CD4-positive, alpha-beta memory T cell (primary cell): ENCODE measurements at regions of chr1 and their contacts with region 1.

Region 1: GRCh38 chr1:37682334-37682987 is 9.9 kb upstream of the CDCA8 start:
- DNase-seq: peak; percentile 67 to 77 (median 72)
- H3K4me3 ChIP-seq: no peak overlapping the region
- H3K4me3 Mint-ChIP-seq: no peak overlapping the region
- H3K27ac ChIP-seq: no peak overlapping the region
- H3K27ac Mint-ChIP-seq: peak overlapping the region; percentile 9 to 86 (median 77)
- H3K4me1 ChIP-seq: peaks cover 3% of the 10 kb centered on the region
- H3K4me1 Mint-ChIP-seq: peaks cover 3 to 15% (median 5%) of the 10 kb centered on the region in 4 donors
- H3K27me3 ChIP-seq: no peaks in the 10 kb centered on the region
- H3K27me3 Mint-ChIP-seq: no peaks in the 10 kb centered on the region

Region 2: GRCh38 chr1:36576118-36576517 is 1106.3 kb before region 1 on chr1:
- CTCF ChIA-PET with region 1: no interaction called
- POLR2A ChIA-PET with region 1: no interaction called
- intact Hi-C with region 1: loop called (anchors 10 kb)
- DNase-seq: peak; percentile 15 to 41 (median 34)
- H3K4me3 ChIP-seq: no peak overlapping the region
- H3K4me3 Mint-ChIP-seq: no peak overlapping the region
- H3K27ac ChIP-seq: no peak overlapping the region
- H3K27ac Mint-ChIP-seq: no peak overlapping the region
- H3K4me1 ChIP-seq: no peaks in the 10 kb centered on the region
- H3K4me1 Mint-ChIP-seq: no peaks in the 10 kb centered on the region
- H3K27me3 ChIP-seq: peaks cover 5% of the 10 kb centered on the region
- H3K27me3 Mint-ChIP-seq: peaks cover 17 to 31% of the 10 kb centered on the region in 2 donors

Region 3: DNA sequence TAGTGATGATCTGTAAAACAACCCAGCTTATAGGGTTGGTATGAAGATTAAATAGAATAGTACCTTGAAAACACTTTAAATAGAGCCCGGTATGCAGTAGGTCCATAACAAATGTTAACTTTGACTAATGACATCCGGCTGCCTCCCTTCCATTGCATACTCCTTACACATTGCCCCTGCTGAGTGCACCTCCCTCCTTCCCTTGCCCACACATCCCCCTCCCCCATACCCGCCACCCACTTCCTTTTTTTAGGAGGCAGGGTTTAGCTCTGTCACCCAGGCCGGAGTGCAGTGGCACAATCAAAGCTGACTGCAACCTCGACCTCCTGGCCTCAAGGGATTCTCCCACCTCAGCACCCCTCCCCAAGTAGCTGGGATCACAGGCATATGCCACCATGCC is 232.5 kb before region 1 on chr1:
- CTCF ChIA-PET with region 1: interaction called, 28 read pairs
- POLR2A ChIA-PET with region 1: no interaction called
- intact Hi-C with region 1: loop called (anchors 1 kb)
- DNase-seq: peak in 3 of 5 donors; percentile 13 to 22 (median 16)
- H3K4me3 ChIP-seq: no peak overlapping the region
- H3K4me3 Mint-ChIP-seq: peak overlapping the region in 2 of 8 donors; percentile 17 to 42
- H3K27ac ChIP-seq: no peak overlapping the region
- H3K27ac Mint-ChIP-seq: peak overlapping the region in 1 of 7 donors; percentile 70
- H3K4me1 ChIP-seq: peaks cover 10% of the 10 kb centered on the region
- H3K4me1 Mint-ChIP-seq: peaks cover 4 to 14% (median 7%) of the 10 kb centered on the region in 4 donors
- H3K27me3 ChIP-seq: no peaks in the 10 kb centered on the region
- H3K27me3 Mint-ChIP-seq: peaks cover 4 to 8% of the 10 kb centered on the region in 2 donors

Region 4: GRCh38 chr1:37514350-37515184 is 167.9 kb before region 1 on chr1 and contains the start of gene MEAF6:
- CTCF ChIA-PET with region 1: interaction called, 10 read pairs
- POLR2A ChIA-PET with region 1: interaction called, 7 read pairs
- intact Hi-C with region 1: loop called (anchors 1 kb)
- DNase-seq: peak; percentile 81 to 88 (median 85)
- H3K4me3 ChIP-seq: peak within 1 kb of the TSS; percentile 74
- H3K4me3 Mint-ChIP-seq: peak within 1 kb of the TSS; percentile 97 to 99 (median 98)
- H3K27ac ChIP-seq: peak within 1 kb of the TSS; percentile 82
- H3K27ac Mint-ChIP-seq: peak within 1 kb of the TSS; percentile 96 to 99 (median 99)
- H3K4me1 ChIP-seq: peaks cover 34% of the 10 kb centered on the region
- H3K4me1 Mint-ChIP-seq: peaks cover 27 to 49% (median 38%) of the 10 kb centered on the region in 4 donors
- H3K27me3 ChIP-seq: no peaks in the 10 kb centered on the region
- H3K27me3 Mint-ChIP-seq: no peaks in the 10 kb centered on the region
- total RNA-seq, gene MEAF6: 97.9 to 98.2 TPM

Region 5: GRCh38 chr1:37561133-37562132 is 121.0 kb before region 1 on chr1:
- CTCF ChIA-PET with region 1: interaction called, 9 read pairs
- POLR2A ChIA-PET with region 1: no interaction called
- intact Hi-C with region 1: loop called (anchors 1 kb)
- DNase-seq: peak in 4 of 5 donors; percentile 16 to 36 (median 24)
- H3K4me3 ChIP-seq: no peak overlapping the region
- H3K4me3 Mint-ChIP-seq: no peak overlapping the region
- H3K27ac ChIP-seq: no peak overlapping the region
- H3K27ac Mint-ChIP-seq: peak overlapping the region in 3 of 7 donors; percentile 23 to 82 (median 81)
- H3K4me1 ChIP-seq: no peaks in the 10 kb centered on the region
- H3K4me1 Mint-ChIP-seq: peaks cover 0 to 1% (median 0%) of the 10 kb centered on the region in 4 donors
- H3K27me3 ChIP-seq: no peaks in the 10 kb centered on the region
- H3K27me3 Mint-ChIP-seq: no peaks in the 10 kb centered on the region

Region 6: GRCh38 chr1:37602750-37603694 is 79.4 kb before region 1 on chr1:
- CTCF ChIA-PET with region 1: interaction called, 228 read pairs
- POLR2A ChIA-PET with region 1: interaction called, 3 read pairs
- intact Hi-C with region 1: loop called (anchors 1 kb)
- DNase-seq: peak in 4 of 5 donors; percentile 47 to 58 (median 54)
- H3K4me3 ChIP-seq: no peak overlapping the region
- H3K4me3 Mint-ChIP-seq: no peak overlapping the region
- H3K27ac ChIP-seq: no peak overlapping the region
- H3K27ac Mint-ChIP-seq: peak overlapping the region in 1 of 7 donors; percentile 11
- H3K4me1 ChIP-seq: no peaks in the 10 kb centered on the region
- H3K4me1 Mint-ChIP-seq: peaks cover 0 to 7% (median 0%) of the 10 kb centered on the region in 4 donors
- H3K27me3 ChIP-seq: no peaks in the 10 kb centered on the region
- H3K27me3 Mint-ChIP-seq: peaks cover 5% of the 10 kb centered on the region in 2 donors

Region 7: DNA sequence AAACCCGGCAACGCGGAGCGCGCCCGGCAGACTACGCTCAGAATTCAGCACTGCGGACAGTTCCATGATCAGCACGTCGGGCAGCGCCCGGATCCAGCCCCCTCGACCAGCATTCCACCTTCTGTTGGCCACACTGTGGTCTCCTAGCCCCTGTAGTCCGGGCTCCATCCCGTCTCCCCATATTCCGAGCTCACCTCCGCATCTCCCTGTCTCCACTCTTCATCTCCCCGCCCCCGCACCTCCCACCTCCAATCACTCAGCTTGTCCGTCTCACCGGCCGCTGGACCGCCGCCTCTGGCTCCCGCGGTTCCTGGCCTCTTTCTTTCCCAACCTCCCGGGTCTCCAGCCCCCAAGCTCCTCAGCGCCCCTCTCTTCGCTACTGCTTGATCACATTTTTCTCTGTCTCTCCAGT is 82.0 kb after region 1 on chr1:
- CTCF ChIA-PET with region 1: no interaction called
- POLR2A ChIA-PET with region 1: no interaction called
- intact Hi-C with region 1: no loop called
- DNase-seq: peak in 1 of 5 donors; percentile 16
- H3K4me3 ChIP-seq: no peak overlapping the region
- H3K4me3 Mint-ChIP-seq: peak overlapping the region in 1 of 8 donors; percentile 64
- H3K27ac ChIP-seq: no peak overlapping the region
- H3K27ac Mint-ChIP-seq: no peak overlapping the region
- H3K4me1 ChIP-seq: peaks cover 10% of the 10 kb centered on the region
- H3K4me1 Mint-ChIP-seq: peaks cover 4 to 25% (median 15%) of the 10 kb centered on the region in 4 donors
- H3K27me3 ChIP-seq: peaks cover 27% of the 10 kb centered on the region
- H3K27me3 Mint-ChIP-seq: peaks cover 53 to 58% of the 10 kb centered on the region in 2 donors